Caco-2 (cell line): ENCODE measurements at regions of chr2 and their contacts with region 1.

Region 1: GRCh38 chr2:177164584-177165052 is 48.0 kb upstream of the HNRNPA3 start:
- DNase-seq: peak; percentile 81 to 84
- H3K4me3 ChIP-seq: peak overlapping the region; percentile 22
- H3K4me3 Mint-ChIP-seq: no peak overlapping the region
- H3K27ac Mint-ChIP-seq: no peak overlapping the region
- H3K4me1 ChIP-seq: peaks cover 46% of the 10 kb centered on the region
- H3K4me1 Mint-ChIP-seq: peaks cover 22% of the 10 kb centered on the region
- H3K27me3 ChIP-seq: no peaks in the 10 kb centered on the region
- H3K27me3 Mint-ChIP-seq: peaks cover 4% of the 10 kb centered on the region
- CTCF ChIP-seq: peak; percentile 98 to 99

Region 2: DNA sequence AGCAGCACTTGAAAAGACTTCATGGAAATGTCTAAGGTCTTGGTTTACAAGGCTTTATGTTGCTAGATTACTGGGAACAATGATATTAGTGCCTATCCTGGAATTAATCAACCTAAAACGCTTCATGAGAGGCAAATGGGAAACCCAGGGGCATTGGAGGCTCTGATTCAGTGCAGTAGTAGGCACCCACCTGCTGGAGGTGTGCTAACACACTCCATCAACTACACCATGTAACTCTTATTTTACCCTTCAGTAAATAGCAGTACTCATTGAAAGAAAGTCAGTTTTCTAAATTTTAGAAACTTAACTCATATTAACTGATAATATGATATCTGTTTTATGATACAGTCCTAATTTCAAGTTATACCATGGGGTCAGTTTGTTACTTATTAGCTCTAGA is 30.6 kb after region 1 on chr2:
- CTCF ChIA-PET with region 1: interaction called, 18 read pairs
- POLR2A ChIA-PET with region 1: no interaction called
- intact Hi-C with region 1: loop called (anchors 2 kb)
- DNase-seq: no peak
- H3K4me3 ChIP-seq: no peak overlapping the region
- H3K4me3 Mint-ChIP-seq: no peak overlapping the region
- H3K27ac Mint-ChIP-seq: no peak overlapping the region
- H3K4me1 ChIP-seq: no peaks in the 10 kb centered on the region
- H3K4me1 Mint-ChIP-seq: no peaks in the 10 kb centered on the region
- H3K27me3 ChIP-seq: no peaks in the 10 kb centered on the region
- H3K27me3 Mint-ChIP-seq: no peaks in the 10 kb centered on the region
- CTCF ChIP-seq: peak in 1 of 2 experiments; percentile 3

Region 3: GRCh38 chr2:177225965-177226360 is 61.3 kb after region 1 on chr2:
- CTCF ChIA-PET with region 1: no interaction called
- POLR2A ChIA-PET with region 1: no interaction called
- intact Hi-C with region 1: loop called (anchors 2 kb)
- DNase-seq: no peak
- H3K4me3 ChIP-seq: no peak overlapping the region
- H3K4me3 Mint-ChIP-seq: no peak overlapping the region
- H3K27ac Mint-ChIP-seq: peak overlapping the region; percentile 74
- H3K4me1 ChIP-seq: peaks cover 3% of the 10 kb centered on the region; the same call in 1 of the 2 replicates
- H3K4me1 Mint-ChIP-seq: peaks cover 5% of the 10 kb centered on the region
- H3K27me3 ChIP-seq: no peaks in the 10 kb centered on the region
- H3K27me3 Mint-ChIP-seq: no peaks in the 10 kb centered on the region
- CTCF ChIP-seq: no peak

Region 4: GRCh38 chr2:177296040-177296439 is 131.4 kb after region 1 on chr2:
- CTCF ChIA-PET with region 1: interaction called, 5 read pairs
- POLR2A ChIA-PET with region 1: no interaction called
- intact Hi-C with region 1: loop called (anchors 1 kb)
- DNase-seq: no peak
- H3K4me3 ChIP-seq: no peak overlapping the region
- H3K4me3 Mint-ChIP-seq: no peak overlapping the region
- H3K27ac Mint-ChIP-seq: no peak overlapping the region
- H3K4me1 ChIP-seq: peaks cover 3% of the 10 kb centered on the region; the same call in 1 of the 2 replicates
- H3K4me1 Mint-ChIP-seq: peaks cover 12% of the 10 kb centered on the region
- H3K27me3 ChIP-seq: no peaks in the 10 kb centered on the region
- H3K27me3 Mint-ChIP-seq: no peaks in the 10 kb centered on the region
- CTCF ChIP-seq: peak; percentile 19 to 21

Region 5: DNA sequence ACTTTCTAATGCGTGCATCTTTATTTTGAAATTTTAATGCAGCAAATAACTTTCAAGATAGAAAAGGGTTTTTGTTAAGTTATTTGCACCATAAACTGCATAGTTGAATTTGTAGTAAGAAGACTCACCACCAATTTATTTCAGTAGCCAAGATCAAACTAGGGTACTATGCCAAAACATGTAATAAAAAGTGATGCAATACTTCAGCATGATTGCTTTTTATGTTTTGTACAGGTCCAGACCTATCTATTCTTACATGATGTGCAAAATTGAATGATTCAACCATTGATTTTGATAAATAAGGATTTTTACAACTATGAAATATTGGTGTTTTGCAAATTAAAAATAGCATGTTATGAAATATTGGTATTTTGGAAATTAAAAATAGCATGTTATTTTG is 254.7 kb after region 1 on chr2:
- CTCF ChIA-PET with region 1: interaction called, 8 read pairs
- POLR2A ChIA-PET with region 1: no interaction called
- intact Hi-C with region 1: loop called (anchors 1 kb)
- DNase-seq: no peak
- H3K4me3 ChIP-seq: no peak overlapping the region
- H3K4me3 Mint-ChIP-seq: no peak overlapping the region
- H3K27ac Mint-ChIP-seq: peak overlapping the region; percentile 53
- H3K4me1 ChIP-seq: peaks cover 34% of the 10 kb centered on the region
- H3K4me1 Mint-ChIP-seq: peaks cover 29% of the 10 kb centered on the region
- H3K27me3 ChIP-seq: no peaks in the 10 kb centered on the region
- H3K27me3 Mint-ChIP-seq: no peaks in the 10 kb centered on the region
- CTCF ChIP-seq: no peak

Region 6: DNA sequence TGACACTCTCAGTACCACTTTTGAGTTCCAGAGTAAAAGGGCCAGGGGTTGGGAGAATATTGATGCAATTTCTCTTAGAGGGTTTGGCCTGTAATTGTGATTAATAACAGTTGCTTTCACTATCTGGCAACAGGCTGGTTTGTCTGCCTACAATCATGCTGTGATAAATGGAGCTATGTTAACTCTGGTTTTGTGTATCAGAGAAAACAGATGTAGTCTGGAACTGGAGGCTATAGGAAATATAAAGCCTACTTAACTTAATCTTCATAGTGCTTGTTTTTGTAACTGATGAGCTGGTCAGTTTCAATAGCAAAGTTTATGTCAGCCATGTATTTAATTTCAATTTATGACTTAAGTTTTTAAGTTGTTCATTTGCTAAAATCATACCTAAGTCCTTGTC is 365.9 kb after region 1 on chr2:
- CTCF ChIA-PET with region 1: no interaction called
- POLR2A ChIA-PET with region 1: no interaction called
- intact Hi-C with region 1: no loop called
- DNase-seq: no peak
- H3K4me3 ChIP-seq: no peak overlapping the region
- H3K4me3 Mint-ChIP-seq: no peak overlapping the region
- H3K27ac Mint-ChIP-seq: no peak overlapping the region
- H3K4me1 ChIP-seq: 0 out of 2 replicates have a peak, but pooled peaks cover 12% of the 10 kb centered on the region
- H3K4me1 Mint-ChIP-seq: peaks cover 7% of the 10 kb centered on the region
- H3K27me3 ChIP-seq: no peaks in the 10 kb centered on the region
- H3K27me3 Mint-ChIP-seq: no peaks in the 10 kb centered on the region
- CTCF ChIP-seq: no peak

Region 7: DNA sequence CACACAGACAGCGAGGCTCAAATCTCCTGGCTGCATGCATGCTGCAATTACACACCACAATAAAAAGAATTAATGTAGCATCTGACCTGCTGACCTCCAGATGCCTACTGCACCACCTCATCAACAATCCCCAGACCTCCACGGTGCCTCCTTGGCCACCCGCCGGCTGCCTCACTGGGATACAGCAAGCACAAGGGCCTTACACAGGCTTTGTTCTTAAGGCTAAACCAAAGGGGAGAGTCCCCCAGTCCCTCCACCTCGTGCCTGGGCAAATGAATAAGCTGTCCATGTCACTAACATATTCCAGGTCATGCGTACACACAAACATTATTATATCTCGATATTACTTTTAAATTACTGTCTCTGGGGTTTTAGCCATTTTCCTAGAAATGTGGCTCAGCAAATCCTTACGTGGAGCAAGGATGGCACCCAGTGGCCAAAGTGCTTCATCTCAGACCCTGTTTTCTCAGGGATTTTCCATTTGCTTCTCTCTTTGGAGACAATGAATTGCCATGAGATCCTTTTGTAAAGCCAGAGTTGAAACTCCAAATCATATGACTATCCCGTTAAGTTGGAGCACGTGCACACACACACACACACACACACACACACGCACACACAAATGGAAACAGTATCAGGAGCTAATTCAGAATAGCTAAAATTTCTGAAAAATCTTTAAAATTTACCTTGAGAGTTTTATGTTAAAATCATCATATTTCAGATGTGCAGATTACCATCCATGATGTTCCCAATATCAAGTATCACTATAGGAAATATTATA is 594.2 kb after region 1 on chr2:
- CTCF ChIA-PET with region 1: no interaction called
- POLR2A ChIA-PET with region 1: no interaction called
- intact Hi-C with region 1: loop called (anchors 1 kb)
- DNase-seq: peak in 1 of 2 experiments; percentile 60
- H3K4me3 ChIP-seq: no peak overlapping the region
- H3K4me3 Mint-ChIP-seq: no peak overlapping the region
- H3K27ac Mint-ChIP-seq: no peak overlapping the region
- H3K4me1 ChIP-seq: peaks cover 12% of the 10 kb centered on the region
- H3K4me1 Mint-ChIP-seq: peaks cover 9% of the 10 kb centered on the region
- H3K27me3 ChIP-seq: no peaks in the 10 kb centered on the region; the same call in 1 of the 2 replicates
- H3K27me3 Mint-ChIP-seq: peaks cover 12% of the 10 kb centered on the region
- CTCF ChIP-seq: peak; percentile 54 to 65